ENCODE measurements at regions of chr2 and their contacts with region 1.

Region 1: DNA sequence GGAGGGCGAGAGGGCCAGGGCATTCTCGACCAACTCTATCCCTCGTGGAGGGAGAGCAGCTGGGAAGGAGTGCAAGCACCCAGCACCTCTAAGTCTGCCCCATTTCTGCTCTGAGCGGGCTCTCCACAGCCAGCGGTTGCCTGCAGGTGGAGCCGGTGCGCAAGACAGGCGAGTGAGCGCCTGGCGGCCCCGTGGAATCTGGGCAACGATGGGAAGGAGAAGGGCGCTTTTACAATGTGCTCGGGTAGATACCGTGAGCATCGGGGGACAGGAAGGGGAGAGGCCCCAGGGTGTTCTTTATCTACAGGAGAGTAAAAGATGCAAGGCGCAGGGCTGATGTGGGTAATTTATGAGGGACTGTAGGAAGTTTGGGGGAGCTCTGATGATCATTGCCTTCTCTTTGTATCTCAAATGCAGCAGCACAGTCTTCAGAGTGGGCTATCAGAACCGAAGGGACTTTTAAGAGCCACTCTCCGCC is 867 bp upstream of the TTL start:
- DNase-seq: peak; percentile 79 to 94 (median 84)
- ATAC-seq: peak; percentile 89
- H3K4me3 ChIP-seq: peak overlapping the region; percentile 76
- H3K27ac ChIP-seq: peak overlapping the region; percentile 91
- H3K4me1 ChIP-seq: peaks cover 13 to 25% of the 10 kb centered on the region in 2 experiments; a peak in 4 of 5 replicates
- H3K27me3 ChIP-seq: no peaks in the 10 kb centered on the region; a peak in 1 of 5 replicates
- CTCF ChIP-seq: peak; percentile 87 to 96 (median 94)
- EP300 ChIP-seq: peak; percentile 36; the same call in 1 of the 2 replicates
- POLR2A ChIP-seq: peak; percentile 66
- RAD21 ChIP-seq: peak; percentile 79 to 88

Region 2: DNA sequence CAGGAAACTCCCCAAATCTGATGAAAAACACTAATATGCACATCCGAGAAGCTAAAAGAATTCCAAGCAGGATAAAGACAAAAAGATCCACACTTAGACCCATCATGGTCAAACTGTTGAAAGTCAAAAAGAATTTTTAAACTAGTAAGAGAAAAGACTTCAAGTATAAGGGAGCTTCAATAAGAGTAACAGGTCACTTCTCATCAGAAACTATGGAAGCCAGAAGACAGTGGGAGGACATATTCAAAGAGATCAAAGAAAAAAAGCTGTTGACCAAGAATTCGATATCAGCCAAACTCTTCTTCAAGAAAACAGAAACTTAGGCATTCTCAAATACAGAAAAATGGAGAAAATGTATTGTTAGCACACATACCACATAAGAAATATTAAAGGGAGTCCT is 276.7 kb before region 1 on chr2:
- CTCF ChIA-PET with region 1: no interaction called
- POLR2A ChIA-PET with region 1: no interaction called
- in situ Hi-C with region 1: no loop called
- intact Hi-C with region 1: no loop called
- DNase-seq: peak in 1 of 4 experiments; percentile 12
- ATAC-seq: no peak
- H3K4me3 ChIP-seq: no peak overlapping the region
- H3K27ac ChIP-seq: no peak overlapping the region
- H3K4me1 ChIP-seq: no peaks in the 10 kb centered on the region
- H3K27me3 ChIP-seq: no peaks in the 10 kb centered on the region
- CTCF ChIP-seq: no peak
- EP300 ChIP-seq: 0 out of 2 replicates have a peak, but pooled peaks have one; percentile 17
- POLR2A ChIP-seq: no peak
- RAD21 ChIP-seq: no peak; a peak in 1 of 4 replicates

Region 3: DNA sequence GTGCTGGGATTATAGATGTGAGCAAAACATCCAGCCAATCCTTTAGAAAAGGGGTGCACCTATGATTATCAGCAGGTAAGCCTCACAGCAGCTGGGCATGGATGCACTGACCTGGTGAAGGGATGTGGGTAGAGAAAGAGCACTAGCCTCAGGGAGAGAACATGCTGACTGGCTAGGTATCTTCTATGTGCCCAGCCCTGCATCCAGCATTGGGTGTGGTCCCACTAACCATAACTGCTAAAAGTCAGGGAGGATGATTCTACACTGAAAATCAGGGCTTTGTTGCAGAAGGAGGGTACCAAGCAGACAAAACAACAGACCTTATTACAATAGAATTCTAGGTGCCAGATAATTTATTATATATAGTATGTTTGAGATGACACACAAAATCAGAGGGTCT is 26.5 kb before region 1 on chr2:
- CTCF ChIA-PET with region 1: no interaction called
- POLR2A ChIA-PET with region 1: no interaction called
- in situ Hi-C with region 1: no loop called
- intact Hi-C with region 1: no loop called
- DNase-seq: no peak
- ATAC-seq: no peak
- H3K4me3 ChIP-seq: no peak overlapping the region
- H3K27ac ChIP-seq: no peak overlapping the region
- H3K4me1 ChIP-seq: no peaks in the 10 kb centered on the region
- H3K27me3 ChIP-seq: peaks cover 0 to 3% of the 10 kb centered on the region in 2 experiments; a peak in 1 of 5 replicates
- CTCF ChIP-seq: no peak
- EP300 ChIP-seq: no peak
- POLR2A ChIP-seq: no peak
- RAD21 ChIP-seq: no peak

Region 4: GRCh38 chr2:112542123-112542983 is 61.3 kb after region 1 on chr2 and contains the start of gene POLR1B:
- CTCF ChIA-PET with region 1: no interaction called
- POLR2A ChIA-PET with region 1: interaction called, 3 read pairs
- in situ Hi-C with region 1: no loop called
- intact Hi-C with region 1: loop called (anchors 2 kb)
- DNase-seq: peak; percentile 80 to 92 (median 84)
- ATAC-seq: peak; percentile 93
- H3K4me3 ChIP-seq: peak within 1 kb of the TSS; percentile 77
- H3K27ac ChIP-seq: peak within 1 kb of the TSS; percentile 91
- H3K4me1 ChIP-seq: peaks cover 5 to 15% of the 10 kb centered on the region in 2 experiments; a peak in 4 of 5 replicates
- H3K27me3 ChIP-seq: no peaks in the 10 kb centered on the region
- CTCF ChIP-seq: no peak
- EP300 ChIP-seq: no peak
- POLR2A ChIP-seq: peak; percentile 75
- RAD21 ChIP-seq: no peak
- polyA plus RNA-seq, gene POLR1B: 19.8 to 38.6 TPM

Region 5: DNA sequence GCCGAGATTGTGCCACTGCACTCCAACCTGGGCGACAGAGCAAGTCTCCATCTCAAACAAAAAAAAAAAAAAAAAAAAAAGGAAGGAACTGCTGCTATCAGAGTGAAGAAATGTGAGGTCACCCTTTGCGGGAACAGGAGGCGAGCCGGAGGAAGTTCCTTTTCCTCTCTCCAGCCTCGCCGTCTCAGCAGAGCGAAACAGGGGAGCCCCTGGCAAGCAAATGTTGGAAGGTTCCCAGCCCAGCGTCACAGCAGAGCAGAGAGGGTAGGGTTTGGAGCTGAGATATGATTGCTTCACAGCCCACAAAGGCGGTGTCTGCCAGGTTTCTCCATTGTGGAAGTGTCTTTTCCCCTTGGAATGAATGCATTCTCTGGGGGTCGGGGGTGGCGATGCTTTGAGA is 193.1 kb after region 1 on chr2:
- CTCF ChIA-PET with region 1: no interaction called
- POLR2A ChIA-PET with region 1: no interaction called
- in situ Hi-C with region 1: no loop called
- intact Hi-C with region 1: no loop called
- DNase-seq: peak in 1 of 4 experiments; percentile 58
- ATAC-seq: peak; percentile 68
- H3K4me3 ChIP-seq: no peak overlapping the region
- H3K27ac ChIP-seq: peak overlapping the region; percentile 29; the same call in 2 of the 3 replicates
- H3K4me1 ChIP-seq: peaks cover 7 to 17% of the 10 kb centered on the region in 2 experiments; a peak in 4 of 5 replicates
- H3K27me3 ChIP-seq: no peaks in the 10 kb centered on the region
- CTCF ChIP-seq: no peak
- EP300 ChIP-seq: no peak
- POLR2A ChIP-seq: no peak
- RAD21 ChIP-seq: peak in 1 of 2 experiments; percentile 14; a peak in 2 of 4 replicates

Measured in K562 (cell line).